ENCODE measurements at regions of chr4 and their contacts with region 1.

Region 1: GRCh38 chr4:38034986-38035882 is 75.0 kb downstream of the PTTG2 start:
- DNase-seq: peak; percentile 42
- ATAC-seq: no peak
- H3K4me3 Mint-ChIP-seq: no peak overlapping the region
- H3K27ac Mint-ChIP-seq: no peak overlapping the region
- H3K4me1 Mint-ChIP-seq: no peaks in the 10 kb centered on the region
- H3K27me3 Mint-ChIP-seq: no peaks in the 10 kb centered on the region

Region 2: GRCh38 chr4:37802068-37802666 is 233.1 kb before region 1 on chr4:
- CTCF ChIA-PET with region 1: interaction called, 20 read pairs
- POLR2A ChIA-PET with region 1: no interaction called
- intact Hi-C with region 1: loop called (anchors 1 kb)
- DNase-seq: peak; percentile 48
- ATAC-seq: no peak
- H3K4me3 Mint-ChIP-seq: no peak overlapping the region
- H3K27ac Mint-ChIP-seq: no peak overlapping the region
- H3K4me1 Mint-ChIP-seq: no peaks in the 10 kb centered on the region
- H3K27me3 Mint-ChIP-seq: peaks cover 4% of the 10 kb centered on the region

Region 3: GRCh38 chr4:37873386-37873785 is 161.8 kb before region 1 on chr4:
- CTCF ChIA-PET with region 1: no interaction called
- POLR2A ChIA-PET with region 1: no interaction called
- intact Hi-C with region 1: loop called in 1 of 2 experiments (anchors 10 kb)
- DNase-seq: no peak
- ATAC-seq: peak; percentile 74
- H3K4me3 Mint-ChIP-seq: no peak overlapping the region
- H3K27ac Mint-ChIP-seq: no peak overlapping the region
- H3K4me1 Mint-ChIP-seq: peaks cover 14% of the 10 kb centered on the region
- H3K27me3 Mint-ChIP-seq: no peaks in the 10 kb centered on the region